ENCODE measurements at regions of chr6 and their contacts with region 1.

Region 1: GRCh38 chr6:41602864-41603608 is 35.2 kb upstream of the MDFI start:
- DNase-seq: peak; percentile 82
- ATAC-seq: peak; percentile 90
- H3K4me3 Mint-ChIP-seq: no peak overlapping the region
- H3K27ac Mint-ChIP-seq: no peak overlapping the region
- H3K4me1 Mint-ChIP-seq: peaks cover 2% of the 10 kb centered on the region
- H3K27me3 Mint-ChIP-seq: no peaks in the 10 kb centered on the region
- CTCF ChIP-seq: peak; percentile 87

Region 2: GRCh38 chr6:41615254-41615653 is 12.2 kb after region 1 on chr6:
- CTCF ChIA-PET with region 1: interaction called, 12 read pairs
- POLR2A ChIA-PET with region 1: no interaction called
- intact Hi-C with region 1: no loop called
- DNase-seq: no peak
- ATAC-seq: no peak
- H3K4me3 Mint-ChIP-seq: no peak overlapping the region
- H3K27ac Mint-ChIP-seq: no peak overlapping the region
- H3K4me1 Mint-ChIP-seq: no peaks in the 10 kb centered on the region
- H3K27me3 Mint-ChIP-seq: peaks cover 11% of the 10 kb centered on the region
- CTCF ChIP-seq: no peak

Region 3: DNA sequence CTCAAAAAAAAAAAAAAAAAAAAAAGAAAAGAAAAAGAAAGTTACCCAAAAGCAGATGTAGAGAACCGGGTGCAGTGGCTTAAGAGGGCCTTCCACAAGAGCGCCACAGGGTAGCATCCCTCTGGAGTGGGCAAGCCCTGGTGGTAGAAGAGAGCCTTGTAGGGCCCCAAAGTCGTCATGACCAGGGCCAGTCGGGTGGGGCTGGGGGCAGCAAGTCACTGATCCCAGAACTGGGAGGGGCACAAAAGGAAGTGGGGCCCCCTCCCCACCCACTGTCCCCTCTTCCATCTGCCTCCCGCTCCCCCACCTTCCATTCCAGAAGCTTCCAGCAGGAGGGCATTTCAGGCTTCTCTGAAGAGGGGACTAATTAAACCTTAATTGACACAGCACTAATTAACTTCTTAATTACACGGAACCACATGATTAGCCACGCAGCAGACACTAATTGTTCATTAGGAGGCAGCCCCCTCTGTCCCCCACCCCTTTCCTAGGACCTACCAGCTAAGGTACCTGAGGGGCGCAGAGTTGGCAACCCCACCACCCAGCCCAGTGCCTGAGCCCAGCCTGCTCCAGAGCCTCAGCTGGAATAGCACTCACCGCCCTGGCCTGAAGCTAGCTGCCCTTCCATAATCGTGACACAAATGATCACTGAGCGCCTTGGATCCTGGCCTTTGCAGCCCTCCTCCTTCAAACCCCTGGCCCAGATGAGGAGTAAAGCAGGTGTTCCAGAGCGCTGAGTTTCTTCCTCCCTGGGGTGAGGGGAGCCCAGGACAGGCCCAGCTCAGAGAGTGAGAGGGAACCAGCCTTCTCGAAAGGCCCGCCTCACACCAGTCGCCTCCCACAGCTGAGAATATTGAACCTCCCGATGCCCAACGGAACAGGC is 70.0 kb after region 1 on chr6:
- CTCF ChIA-PET with region 1: no interaction called
- POLR2A ChIA-PET with region 1: no interaction called
- intact Hi-C with region 1: no loop called
- DNase-seq: no peak
- ATAC-seq: no peak
- H3K4me3 Mint-ChIP-seq: no peak overlapping the region
- H3K27ac Mint-ChIP-seq: no peak overlapping the region
- H3K4me1 Mint-ChIP-seq: no peaks in the 10 kb centered on the region
- H3K27me3 Mint-ChIP-seq: peaks cover 6% of the 10 kb centered on the region
- CTCF ChIP-seq: no peak

Region 4: GRCh38 chr6:41683510-41684310 is 80.7 kb after region 1 on chr6:
- CTCF ChIA-PET with region 1: interaction called, 107 read pairs
- POLR2A ChIA-PET with region 1: interaction called, 3 read pairs
- intact Hi-C with region 1: loop called (anchors 2 kb)
- DNase-seq: peak; percentile 87
- ATAC-seq: peak; percentile 93
- H3K4me3 Mint-ChIP-seq: peak overlapping the region; percentile 70
- H3K27ac Mint-ChIP-seq: peak overlapping the region; percentile 68
- H3K4me1 Mint-ChIP-seq: peaks cover 5% of the 10 kb centered on the region
- H3K27me3 Mint-ChIP-seq: peaks cover 1% of the 10 kb centered on the region
- CTCF ChIP-seq: peak; percentile 86

Measured in activated CD8-positive, alpha-beta T cell treated with anti-CD3 and anti-CD28 coated beads for 36 hours (primary cell).